ENCODE measurements at regions of chr19 and their contacts with region 1.

Region 1: DNA sequence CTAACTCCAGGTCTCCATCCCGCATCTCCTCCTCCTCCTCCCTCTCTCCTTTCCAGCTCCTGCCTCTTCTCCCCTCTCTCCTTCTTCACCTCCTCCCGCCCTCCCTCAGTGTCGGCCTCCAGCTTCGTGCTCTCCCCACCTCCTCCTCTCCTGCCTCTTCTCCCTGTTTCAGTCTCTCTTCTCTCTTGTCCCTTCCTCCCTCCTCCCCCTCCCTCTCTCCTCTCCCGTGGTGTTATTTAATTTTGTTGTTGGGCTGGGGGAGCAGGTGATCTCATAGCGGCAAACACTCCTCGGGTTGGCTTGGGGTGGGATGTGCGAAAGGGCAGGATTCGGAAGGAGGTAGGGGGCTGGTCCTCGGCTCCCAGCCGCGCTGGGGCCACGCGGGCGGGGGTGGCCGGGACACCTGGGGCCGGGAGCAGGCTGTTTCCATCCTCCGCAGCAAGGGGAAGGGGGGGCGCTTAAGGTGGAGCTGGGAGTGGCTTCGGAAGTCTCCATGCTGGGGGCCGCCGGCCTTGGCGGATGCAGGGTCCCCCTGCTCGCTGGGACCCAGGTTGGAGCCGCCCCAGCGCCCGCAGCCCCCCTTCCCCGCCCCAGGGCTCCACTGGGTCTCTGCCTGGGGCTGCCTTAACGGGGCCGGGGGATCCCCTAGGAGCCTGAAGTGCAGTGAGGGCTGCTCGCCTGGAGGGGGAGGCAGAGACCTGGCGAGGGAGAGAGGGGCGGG is at the start of gene CA11:
- DNase-seq: peak; percentile 97
- ATAC-seq: peak; percentile 85
- H3K4me3 Mint-ChIP-seq: peak within 1 kb of the TSS; percentile 85
- H3K27ac Mint-ChIP-seq: peak within 1 kb of the TSS; percentile 84
- H3K4me1 Mint-ChIP-seq: peaks cover 9% of the 10 kb centered on the region
- H3K27me3 Mint-ChIP-seq: no peaks in the 10 kb centered on the region; the same call in none of the 2 replicates
- CTCF ChIP-seq: peak; percentile 72
- total RNA-seq, gene CA11: 41.4 to 53.7 TPM (median 47.5 TPM) in 3 replicates

Region 2: GRCh38 chr19:48461982-48462655 is 184.0 kb before region 1 on chr19:
- CTCF ChIA-PET with region 1: no interaction called
- POLR2A ChIA-PET with region 1: no interaction called
- DNase-seq: peak; percentile 91
- ATAC-seq: peak; percentile 97
- H3K4me3 Mint-ChIP-seq: no peak overlapping the region
- H3K27ac Mint-ChIP-seq: no peak overlapping the region
- H3K4me1 Mint-ChIP-seq: 0 out of 2 replicates have a peak, but pooled peaks cover 2% of the 10 kb centered on the region
- H3K27me3 Mint-ChIP-seq: peaks cover 27% of the 10 kb centered on the region
- CTCF ChIP-seq: no peak

Region 3: GRCh38 chr19:48630296-48631063 is 15.7 kb before region 1 on chr19:
- CTCF ChIA-PET with region 1: interaction called, 20 read pairs
- POLR2A ChIA-PET with region 1: interaction called, 20 read pairs
- DNase-seq: peak; percentile 72
- ATAC-seq: peak; percentile 11
- H3K4me3 Mint-ChIP-seq: peak overlapping the region; percentile 71
- H3K27ac Mint-ChIP-seq: peak overlapping the region; percentile 99
- H3K4me1 Mint-ChIP-seq: peaks cover 32% of the 10 kb centered on the region
- H3K27me3 Mint-ChIP-seq: no peaks in the 10 kb centered on the region
- CTCF ChIP-seq: no peak

Region 4: GRCh38 chr19:48696353-48697010 is 50.3 kb after region 1 on chr19:
- CTCF ChIA-PET with region 1: interaction called, 17 read pairs
- POLR2A ChIA-PET with region 1: interaction called, 10 read pairs
- DNase-seq: peak; percentile 46
- ATAC-seq: peak; percentile 53
- H3K4me3 Mint-ChIP-seq: peak overlapping the region; percentile 97
- H3K27ac Mint-ChIP-seq: peak overlapping the region; percentile 79
- H3K4me1 Mint-ChIP-seq: peaks cover 4% of the 10 kb centered on the region
- H3K27me3 Mint-ChIP-seq: no peaks in the 10 kb centered on the region
- CTCF ChIP-seq: no peak

Region 5: DNA sequence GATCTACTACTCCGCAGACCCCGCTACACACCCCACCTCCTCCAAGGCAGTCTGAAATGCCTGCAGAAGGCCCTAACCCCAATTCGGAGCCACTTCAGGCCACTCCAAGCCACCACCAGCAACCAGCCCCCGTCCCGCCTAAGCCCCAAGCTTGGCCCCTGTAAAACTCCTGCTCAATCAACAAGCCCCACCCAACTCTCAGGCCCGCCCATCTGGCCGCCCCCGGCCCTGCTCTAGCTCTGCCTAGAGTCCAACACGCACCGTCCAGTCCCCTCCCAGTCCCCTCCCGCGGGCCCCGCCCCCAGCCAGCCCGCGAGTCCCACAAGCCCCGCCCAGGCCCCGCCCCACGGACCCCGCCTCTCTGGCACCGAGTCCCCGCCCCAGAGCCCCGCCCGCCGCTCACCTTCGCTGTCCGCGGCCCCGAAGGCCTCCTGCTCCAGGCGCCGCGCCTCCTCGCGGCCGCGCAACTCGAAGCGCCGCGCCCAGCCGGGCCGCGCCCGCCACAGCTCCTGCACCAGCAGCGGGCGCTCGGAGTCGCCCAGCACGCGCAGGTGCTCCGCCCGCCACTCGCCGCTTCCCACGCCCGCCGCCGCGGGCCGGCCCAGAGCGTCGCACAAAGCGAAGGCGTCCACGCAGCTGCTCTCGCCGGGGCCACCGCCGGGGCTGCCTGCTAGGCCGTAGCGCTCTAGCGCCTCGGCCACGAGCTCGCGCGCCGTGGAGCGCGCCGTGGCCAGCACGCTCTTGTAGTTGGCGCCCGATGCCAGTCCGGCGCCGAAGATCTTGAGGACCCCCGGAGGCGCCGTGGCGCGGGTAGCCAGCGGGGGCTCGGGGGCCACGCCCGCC is 92.6 kb after region 1 on chr19:
- CTCF ChIA-PET with region 1: interaction called, 41 read pairs
- POLR2A ChIA-PET with region 1: interaction called, 4 read pairs
- DNase-seq: peak; percentile 99
- ATAC-seq: peak; percentile 81
- H3K4me3 Mint-ChIP-seq: peak overlapping the region; percentile 63
- H3K27ac Mint-ChIP-seq: peak overlapping the region; percentile 94
- H3K4me1 Mint-ChIP-seq: peaks cover 42% of the 10 kb centered on the region
- H3K27me3 Mint-ChIP-seq: peaks cover 49% of the 10 kb centered on the region
- CTCF ChIP-seq: no peak

Region 6: DNA sequence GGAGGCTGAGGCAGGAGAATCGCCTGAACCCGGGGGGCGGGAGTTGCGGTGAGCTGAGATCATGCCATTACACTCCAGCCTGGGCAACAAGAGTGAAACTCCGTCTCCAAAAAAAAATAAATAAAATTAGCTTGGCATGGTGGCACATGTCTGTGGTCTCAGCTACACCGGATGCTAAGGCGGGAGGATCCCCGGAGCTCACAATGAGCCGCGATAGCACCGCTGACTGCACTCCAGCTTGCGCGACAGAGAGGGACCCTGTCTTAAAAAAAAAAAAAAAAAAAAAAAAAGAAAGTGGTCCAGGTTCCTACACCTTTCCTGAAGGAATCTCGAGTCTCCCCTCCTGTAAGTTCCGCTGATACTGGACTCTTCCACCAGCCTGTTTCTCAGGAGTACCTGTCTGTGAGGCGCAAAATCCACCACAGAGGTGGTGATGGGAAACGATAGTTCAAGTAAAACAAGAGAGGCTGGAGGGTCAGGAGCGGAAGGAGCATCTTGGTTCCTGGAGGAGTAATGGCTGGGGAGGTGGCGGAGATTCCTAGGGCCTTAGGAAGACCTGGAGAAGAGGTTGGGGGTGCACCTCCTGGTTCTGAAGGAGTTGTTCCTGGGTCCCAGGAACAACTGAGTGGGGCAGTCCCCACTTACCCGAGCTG is 105.8 kb after region 1 on chr19:
- CTCF ChIA-PET with region 1: interaction called, 11 read pairs
- POLR2A ChIA-PET with region 1: interaction called, 17 read pairs
- DNase-seq: no peak
- ATAC-seq: peak; percentile 7
- H3K4me3 Mint-ChIP-seq: peak overlapping the region; percentile 95
- H3K27ac Mint-ChIP-seq: peak overlapping the region; percentile 91
- H3K4me1 Mint-ChIP-seq: peaks cover 45% of the 10 kb centered on the region
- H3K27me3 Mint-ChIP-seq: peaks cover 10% of the 10 kb centered on the region
- CTCF ChIP-seq: no peak

Region 7: DNA sequence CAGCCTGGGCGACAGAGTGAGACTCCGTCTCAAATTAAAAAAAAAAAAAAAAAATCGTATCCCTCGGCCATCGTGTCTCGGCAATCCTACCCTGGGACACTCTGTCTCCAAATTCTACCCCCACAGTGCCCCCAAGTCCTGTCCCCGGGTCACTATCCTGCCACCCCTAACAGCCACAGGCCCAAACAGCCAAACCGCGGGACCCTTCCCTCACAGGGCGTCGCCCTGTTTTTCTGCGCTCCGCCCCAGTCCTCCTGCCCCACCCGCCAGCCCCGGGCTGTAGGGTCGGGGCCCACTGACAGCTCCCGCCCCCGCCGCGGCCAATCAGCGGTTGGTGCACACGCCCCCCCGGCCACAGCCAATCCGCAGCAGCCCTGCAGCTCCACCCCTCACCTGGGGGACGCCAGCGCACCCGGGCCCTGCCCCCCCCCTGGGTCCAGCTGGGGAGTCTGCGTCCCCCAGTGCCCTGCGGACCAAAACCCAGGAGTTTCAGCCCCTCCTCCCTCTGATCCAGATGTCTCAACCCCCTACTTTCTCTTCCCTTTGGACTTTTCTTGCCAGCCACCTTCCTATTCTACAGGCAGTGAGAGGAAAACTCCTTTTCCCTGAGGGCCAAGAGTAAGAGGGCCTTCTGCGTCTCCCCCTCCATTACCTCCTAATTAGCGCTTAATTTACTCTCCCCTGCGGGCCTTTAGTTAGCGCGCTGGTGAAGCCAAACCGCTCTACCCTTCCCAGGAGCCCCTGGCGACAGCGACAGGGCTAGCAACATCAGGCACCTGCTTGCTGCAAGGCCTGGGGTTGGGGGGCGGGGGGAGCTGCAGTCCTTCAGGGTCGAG is 166.2 kb after region 1 on chr19:
- CTCF ChIA-PET with region 1: interaction called, 17 read pairs
- POLR2A ChIA-PET with region 1: interaction called, 3 read pairs
- DNase-seq: peak; percentile 92
- ATAC-seq: peak; percentile 73
- H3K4me3 Mint-ChIP-seq: peak overlapping the region; percentile 69
- H3K27ac Mint-ChIP-seq: peak overlapping the region; percentile 98
- H3K4me1 Mint-ChIP-seq: peaks cover 36% of the 10 kb centered on the region
- H3K27me3 Mint-ChIP-seq: peaks cover 30% of the 10 kb centered on the region
- CTCF ChIP-seq: no peak